Activated CD8-positive, alpha-beta T cell treated with anti-CD3 and anti-CD28 coated beads for 36 hours (primary cell): ENCODE measurements at regions of chr12 and their contacts with region 1.

Region 1: DNA sequence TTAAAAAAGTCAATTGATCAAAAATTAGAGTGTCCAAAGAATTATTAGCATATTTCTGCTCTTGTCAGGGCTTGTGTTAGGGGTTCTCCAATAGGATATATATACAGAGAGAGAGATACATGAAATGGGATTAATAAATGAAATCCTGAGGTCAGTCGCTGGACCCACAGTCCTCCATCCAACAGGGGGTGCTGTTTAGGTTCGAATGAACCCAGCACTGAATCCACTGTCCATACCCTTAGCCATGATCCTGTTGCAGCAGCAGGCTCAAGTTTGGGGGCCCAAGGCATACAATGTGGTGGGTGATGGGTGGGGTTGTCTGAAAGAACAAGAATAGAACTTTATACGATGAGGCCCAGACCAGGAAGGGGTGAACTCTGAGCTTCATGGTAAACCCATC is 780 bp upstream of the MYO1H start:
- DNase-seq: peak; percentile 25
- ATAC-seq: no peak
- H3K4me3 Mint-ChIP-seq: no peak overlapping the region
- H3K27ac Mint-ChIP-seq: no peak overlapping the region
- H3K4me1 Mint-ChIP-seq: no peaks in the 10 kb centered on the region
- H3K27me3 Mint-ChIP-seq: peaks cover 10% of the 10 kb centered on the region
- CTCF ChIP-seq: peak; percentile 40

Region 2: GRCh38 chr12:109331301-109331952 is 15.5 kb before region 1 on chr12:
- CTCF ChIA-PET with region 1: no interaction called
- POLR2A ChIA-PET with region 1: no interaction called
- intact Hi-C with region 1: no loop called
- DNase-seq: no peak
- ATAC-seq: no peak
- H3K4me3 Mint-ChIP-seq: no peak overlapping the region
- H3K27ac Mint-ChIP-seq: no peak overlapping the region
- H3K4me1 Mint-ChIP-seq: no peaks in the 10 kb centered on the region
- H3K27me3 Mint-ChIP-seq: peaks cover 6% of the 10 kb centered on the region
- CTCF ChIP-seq: no peak

Region 3: DNA sequence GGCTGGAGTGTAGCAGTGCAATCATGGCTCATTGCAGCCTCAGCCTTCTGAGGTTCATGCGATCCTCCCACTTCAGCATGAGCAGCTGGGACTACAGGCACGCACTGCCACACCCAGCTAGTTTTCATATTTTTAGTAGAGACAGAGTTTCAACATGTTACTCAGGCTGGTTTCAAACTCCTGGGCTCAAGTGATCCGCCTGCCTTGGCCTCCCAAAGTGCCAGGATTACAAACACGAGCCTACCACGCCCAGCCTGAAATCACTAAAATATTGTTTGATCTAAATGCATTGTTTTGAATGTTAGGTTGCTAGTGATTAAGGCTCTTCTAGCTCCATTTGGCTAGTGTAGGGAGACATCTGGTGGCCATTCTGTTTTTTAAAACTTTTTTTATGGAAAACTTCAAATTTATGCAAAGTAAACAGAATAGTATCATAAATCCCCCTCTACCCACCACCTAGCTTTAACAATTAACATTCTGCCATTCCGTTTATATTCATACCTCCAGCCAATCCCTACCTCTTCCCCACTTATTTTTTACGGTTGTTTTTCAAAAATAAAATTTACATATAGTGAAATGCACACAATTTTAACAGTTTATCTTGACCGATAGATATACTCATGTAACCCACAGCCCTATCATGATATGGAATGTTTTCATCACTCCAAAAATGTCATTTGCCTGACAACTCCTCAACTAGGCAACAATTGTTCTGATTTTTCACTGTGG is 38.6 kb after region 1 on chr12:
- CTCF ChIA-PET with region 1: interaction called, 7 read pairs
- POLR2A ChIA-PET with region 1: no interaction called
- intact Hi-C with region 1: loop called (anchors 2 kb)
- DNase-seq: no peak
- ATAC-seq: no peak
- H3K4me3 Mint-ChIP-seq: no peak overlapping the region
- H3K27ac Mint-ChIP-seq: no peak overlapping the region
- H3K4me1 Mint-ChIP-seq: no peaks in the 10 kb centered on the region
- H3K27me3 Mint-ChIP-seq: peaks cover 19% of the 10 kb centered on the region
- CTCF ChIP-seq: peak; percentile 51